ENCODE measurements at regions of chr19 and their contacts with region 1.

Region 1: GRCh38 chr19:18940769-18941407 is at the start of gene HOMER3:
- DNase-seq: peak; percentile 87 to 92
- ATAC-seq: peak; percentile 71 to 78 (median 74)
- H3K4me3 ChIP-seq: peak within 1 kb of the TSS; percentile 89
- H3K27ac ChIP-seq: peak within 1 kb of the TSS; percentile 82
- H3K4me1 ChIP-seq: peaks cover 8% of the 10 kb centered on the region
- H3K27me3 ChIP-seq: no peaks in the 10 kb centered on the region
- CTCF ChIP-seq: peak; percentile 34
- total RNA-seq, gene HOMER3: 61.4 to 77.9 (median 67.7) TPM

Region 2: DNA sequence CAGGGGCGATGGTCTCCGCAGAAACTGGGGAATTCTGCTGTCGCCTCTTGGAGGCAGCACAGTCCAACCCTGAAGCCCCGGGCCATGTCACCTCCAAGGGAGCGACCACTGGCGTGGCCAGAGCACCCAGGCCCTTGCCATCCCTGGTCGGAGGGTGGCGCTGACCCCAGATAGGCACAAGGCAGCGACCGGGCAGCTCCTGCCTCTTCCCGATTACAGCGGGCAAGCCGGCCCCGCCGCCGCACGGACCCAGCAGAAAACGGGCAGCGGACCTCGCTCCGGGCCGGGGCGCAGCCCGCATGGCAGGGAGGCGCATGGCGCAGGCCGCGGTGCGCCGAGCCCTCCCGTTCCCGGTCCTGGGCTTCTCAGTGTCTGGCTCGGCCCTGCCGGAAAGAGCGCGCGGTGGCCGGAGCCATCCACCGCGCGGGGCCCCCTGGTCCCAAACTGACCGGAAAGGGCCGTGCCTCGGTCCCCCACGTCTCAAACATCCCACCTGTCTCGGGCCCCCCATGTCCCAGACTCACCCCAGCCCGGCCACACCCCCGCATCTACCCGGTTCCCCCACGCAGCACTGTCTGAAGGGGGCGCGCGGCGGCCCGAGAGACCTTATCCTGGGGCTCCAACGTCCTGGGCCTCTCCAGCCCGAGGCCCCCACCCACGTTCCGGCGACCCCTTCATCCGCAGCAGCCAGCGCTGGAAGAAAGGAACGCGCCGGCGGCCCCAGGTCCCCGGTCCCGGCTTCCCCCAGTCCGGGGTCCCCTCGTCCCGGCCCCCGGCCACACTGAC is 45.7 kb before region 1 on chr19:
- intact Hi-C with region 1: loop called in 1 of 2 experiments (anchors 2 kb)
- DNase-seq: peak; percentile 57 to 85
- ATAC-seq: peak; percentile 76 to 84 (median 82)
- H3K4me3 ChIP-seq: peak overlapping the region; percentile 66
- H3K27ac ChIP-seq: peak overlapping the region; percentile 50
- H3K4me1 ChIP-seq: peaks cover 14% of the 10 kb centered on the region
- H3K27me3 ChIP-seq: no peaks in the 10 kb centered on the region
- CTCF ChIP-seq: peak; percentile 52

Region 3: DNA sequence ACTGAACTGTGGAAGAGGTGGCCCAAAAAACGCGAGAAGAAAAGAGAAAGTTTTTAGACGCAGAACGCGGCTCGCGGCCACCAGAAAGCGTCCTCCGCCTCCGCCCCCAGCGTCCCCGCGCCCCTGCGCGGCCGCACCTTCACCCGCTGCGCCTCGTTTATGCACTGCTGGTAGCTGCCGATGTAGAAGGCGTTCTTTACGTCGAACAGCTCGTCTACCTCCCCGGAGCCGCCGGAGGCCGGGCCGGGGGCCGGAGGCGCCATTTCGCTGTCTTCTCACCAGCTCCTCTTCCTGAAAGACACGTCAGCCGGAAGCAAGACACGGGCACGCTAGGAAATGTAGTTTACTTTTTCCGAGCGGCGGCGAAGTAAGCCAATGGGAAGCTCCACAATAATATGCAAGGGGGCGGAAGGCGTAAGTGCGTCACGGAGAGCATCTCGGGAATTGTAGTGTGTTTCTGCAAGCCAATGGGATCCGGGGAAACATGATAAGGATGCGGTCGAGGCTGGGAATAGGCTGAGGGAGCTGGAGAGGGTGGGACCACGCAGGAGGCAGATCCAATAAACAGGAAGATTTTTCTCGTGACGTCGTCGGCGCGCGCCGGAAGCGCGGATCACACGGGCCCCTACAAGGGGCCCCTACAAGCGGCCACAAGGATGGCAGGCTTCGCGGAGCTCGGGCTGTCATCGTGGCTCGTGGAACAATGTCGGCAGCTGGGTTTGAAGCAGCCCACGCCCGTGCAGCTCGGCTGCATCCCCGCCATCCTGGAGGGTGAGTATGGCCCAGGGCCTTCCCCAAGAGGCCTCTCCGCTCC is 21.6 kb before region 1 on chr19 and contains the starts of genes COPE and DDX49:
- intact Hi-C with region 1: loop called in 1 of 2 experiments (anchors 1 kb)
- DNase-seq: peak; percentile 98
- ATAC-seq: peak; percentile 97 to 98 (median 98)
- H3K4me3 ChIP-seq: peak within 1 kb of the TSS; percentile 81
- H3K27ac ChIP-seq: peak within 1 kb of the TSS; percentile 94
- H3K4me1 ChIP-seq: peaks cover 20% of the 10 kb centered on the region
- H3K27me3 ChIP-seq: no peaks in the 10 kb centered on the region
- CTCF ChIP-seq: no peak
- total RNA-seq, gene COPE: 91.5 to 110 (median 105) TPM
- total RNA-seq, gene DDX49: 27.2 to 35.3 (median 30.3) TPM

Region 4: GRCh38 chr19:18985257-18985656 is 44.4 kb after region 1 on chr19:
- intact Hi-C with region 1: loop called in 1 of 2 experiments (anchors 5 kb)
- DNase-seq: no peak
- ATAC-seq: no peak
- H3K4me3 ChIP-seq: no peak overlapping the region
- H3K27ac ChIP-seq: peak overlapping the region; percentile 9
- H3K4me1 ChIP-seq: no peaks in the 10 kb centered on the region
- H3K27me3 ChIP-seq: peaks cover 0 to 10% (median 2%) of the 10 kb centered on the region in 3 donors
- CTCF ChIP-seq: no peak

Measured in psoas muscle (tissue), 8 donors.